Upper lobe of right lung (tissue), 1 donor: ENCODE measurements at regions of chr17 and their contacts with region 1.

Region 1: GRCh38 chr17:37744961-37745800 is at the start of gene HNF1B:
- DNase-seq: peak; percentile 79
- ATAC-seq: peak; percentile 74
- H3K4me3 ChIP-seq: peak within 1 kb of the TSS; percentile 53
- H3K27ac ChIP-seq: peak within 1 kb of the TSS; percentile 81
- H3K4me1 ChIP-seq: peaks cover 31% of the 10 kb centered on the region
- H3K27me3 ChIP-seq: peaks cover 73% of the 10 kb centered on the region
- CTCF ChIP-seq: no peak
- total RNA-seq, gene HNF1B: 19.8 TPM

Region 2: DNA sequence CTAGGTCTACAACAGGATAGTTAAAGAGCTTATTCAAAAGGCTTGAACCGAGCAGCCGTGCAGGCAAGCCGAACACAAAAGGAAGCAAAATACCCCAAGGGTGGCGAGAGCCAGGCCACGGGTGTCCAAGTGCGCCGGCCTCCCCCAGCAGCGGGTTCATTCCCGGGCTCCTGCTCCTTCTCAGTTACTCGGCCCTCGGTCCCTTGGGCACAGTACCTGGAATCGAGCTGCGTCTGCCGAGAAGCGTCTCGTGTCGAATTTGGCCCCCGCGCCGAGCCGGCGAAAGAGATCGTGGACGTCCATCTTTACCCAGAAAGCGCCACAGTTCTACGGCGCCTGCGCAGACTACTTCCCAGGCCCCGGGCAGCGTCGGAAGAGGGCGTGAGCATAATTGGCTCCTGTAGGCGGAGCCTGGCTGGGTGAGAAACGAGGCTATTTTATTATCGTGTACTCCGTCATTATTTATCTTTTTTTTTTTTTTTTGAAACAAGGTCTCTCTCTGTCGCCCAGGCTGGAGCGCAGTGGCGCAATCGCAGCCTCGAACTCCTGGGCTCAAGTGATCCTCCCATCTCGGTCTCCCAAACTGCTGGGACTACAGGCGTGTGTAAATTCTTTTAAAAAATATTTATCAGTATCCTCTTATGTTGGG is 101.9 kb before region 1 on chr17 and contains the start of gene DDX52:
- intact Hi-C with region 1: loop called (anchors 5 kb)
- DNase-seq: peak; percentile 95
- ATAC-seq: peak; percentile 99
- H3K4me3 ChIP-seq: peak within 1 kb of the TSS; percentile 93
- H3K27ac ChIP-seq: peak within 1 kb of the TSS; percentile 89
- H3K4me1 ChIP-seq: peaks cover 22% of the 10 kb centered on the region
- H3K27me3 ChIP-seq: no peaks in the 10 kb centered on the region
- CTCF ChIP-seq: peak; percentile 13
- total RNA-seq, gene DDX52: 20.9 TPM